GM12878 (cell line): ENCODE measurements at regions of chr4 and their contacts with region 1.

Region 1: GRCh38 chr4:105146276-105147015 is at the start of gene TET2:
- DNase-seq: peak; percentile 74
- ATAC-seq: peak; percentile 80
- H3K4me3 ChIP-seq: peak within 1 kb of the TSS; percentile 99
- H3K27ac ChIP-seq: peak within 1 kb of the TSS; percentile 96
- H3K4me1 ChIP-seq: no peaks in the 10 kb centered on the region
- H3K27me3 ChIP-seq: no peaks in the 10 kb centered on the region
- CTCF ChIP-seq: peak in 1 of 3 experiments; percentile 8; a peak in 1 of 6 replicates
- EP300 ChIP-seq: no peak; a peak in 1 of 4 replicates
- POLR2A ChIP-seq: peak; percentile 76
- RAD21 ChIP-seq: no peak; the same call in 1 of the 2 replicates
- polyA plus RNA-seq, gene TET2: 3.7 to 6.6 TPM

Region 2: DNA sequence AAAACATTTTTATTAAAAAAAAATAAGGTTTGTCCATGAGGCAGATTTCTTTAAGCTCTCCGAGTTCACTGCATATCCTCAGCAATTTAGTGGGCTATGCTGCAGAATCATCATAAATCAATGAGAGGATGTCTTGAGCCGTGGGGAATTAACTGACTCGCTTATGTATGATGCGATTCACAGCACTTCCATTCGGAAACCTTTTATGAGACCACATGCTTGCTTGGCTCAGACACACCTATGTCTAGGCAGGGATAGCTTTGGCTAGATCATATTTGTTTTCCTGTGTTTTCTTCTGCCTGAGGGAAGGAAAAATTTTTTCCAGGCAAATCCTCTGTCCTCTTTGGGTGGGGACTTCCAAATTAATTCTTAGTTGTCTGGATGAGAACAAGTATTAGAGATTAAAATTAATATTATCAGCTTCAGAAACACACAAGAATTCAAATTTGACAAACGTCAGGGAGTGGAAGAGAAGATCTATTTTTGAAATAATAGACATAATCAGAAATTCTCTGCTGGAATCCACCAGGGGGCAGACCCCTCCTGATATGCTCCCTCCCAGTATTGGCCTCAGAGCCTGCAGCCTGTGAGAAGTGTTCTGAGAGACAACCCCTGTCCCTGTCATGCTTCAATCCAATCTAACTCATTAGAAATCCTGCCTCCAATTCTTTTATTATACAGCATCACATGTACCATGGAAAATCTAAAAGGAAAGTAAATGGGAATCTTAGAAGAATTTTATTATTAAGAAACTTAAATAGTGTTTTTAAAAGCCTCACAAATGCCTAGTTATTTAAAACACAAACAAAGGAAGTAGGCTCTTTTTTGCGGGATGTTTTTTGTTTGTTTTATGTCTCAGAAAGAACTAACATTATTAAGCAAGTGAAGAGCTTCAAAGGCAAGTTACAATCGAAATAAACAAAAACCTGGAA is 1081.5 kb before region 1 on chr4:
- CTCF ChIA-PET with region 1: no interaction called
- POLR2A ChIA-PET with region 1: no interaction called
- RAD21 ChIA-PET with region 1: no interaction called
- SMC1A ChIA-PET with region 1: no interaction called
- in situ Hi-C with region 1: no loop called
- intact Hi-C with region 1: loop called (anchors 10 kb)
- DNase-seq: peak; percentile 23
- ATAC-seq: peak; percentile 97
- H3K4me3 ChIP-seq: no peak overlapping the region
- H3K27ac ChIP-seq: no peak overlapping the region
- H3K4me1 ChIP-seq: no peaks in the 10 kb centered on the region
- H3K27me3 ChIP-seq: no peaks in the 10 kb centered on the region
- CTCF ChIP-seq: peak; percentile 56 to 74 (median 58); a peak in 5 of 6 replicates
- EP300 ChIP-seq: no peak
- POLR2A ChIP-seq: no peak
- RAD21 ChIP-seq: peak; percentile 88

Region 3: GRCh38 chr4:104868958-104869357 is 277.5 kb before region 1 on chr4:
- CTCF ChIA-PET with region 1: no interaction called
- POLR2A ChIA-PET with region 1: no interaction called
- RAD21 ChIA-PET with region 1: no interaction called
- SMC1A ChIA-PET with region 1: no interaction called
- in situ Hi-C with region 1: no loop called
- intact Hi-C with region 1: loop called (anchors 2 kb)
- DNase-seq: peak; percentile 79
- ATAC-seq: peak; percentile 93
- H3K4me3 ChIP-seq: peak overlapping the region; percentile 24; the same call in 1 of the 2 replicates
- H3K27ac ChIP-seq: peak overlapping the region; percentile 67
- H3K4me1 ChIP-seq: peaks cover 36% of the 10 kb centered on the region
- H3K27me3 ChIP-seq: no peaks in the 10 kb centered on the region
- CTCF ChIP-seq: no peak
- EP300 ChIP-seq: peak; percentile 92 to 96
- POLR2A ChIP-seq: no peak
- RAD21 ChIP-seq: peak; percentile 24; the same call in 1 of the 2 replicates

Region 4: DNA sequence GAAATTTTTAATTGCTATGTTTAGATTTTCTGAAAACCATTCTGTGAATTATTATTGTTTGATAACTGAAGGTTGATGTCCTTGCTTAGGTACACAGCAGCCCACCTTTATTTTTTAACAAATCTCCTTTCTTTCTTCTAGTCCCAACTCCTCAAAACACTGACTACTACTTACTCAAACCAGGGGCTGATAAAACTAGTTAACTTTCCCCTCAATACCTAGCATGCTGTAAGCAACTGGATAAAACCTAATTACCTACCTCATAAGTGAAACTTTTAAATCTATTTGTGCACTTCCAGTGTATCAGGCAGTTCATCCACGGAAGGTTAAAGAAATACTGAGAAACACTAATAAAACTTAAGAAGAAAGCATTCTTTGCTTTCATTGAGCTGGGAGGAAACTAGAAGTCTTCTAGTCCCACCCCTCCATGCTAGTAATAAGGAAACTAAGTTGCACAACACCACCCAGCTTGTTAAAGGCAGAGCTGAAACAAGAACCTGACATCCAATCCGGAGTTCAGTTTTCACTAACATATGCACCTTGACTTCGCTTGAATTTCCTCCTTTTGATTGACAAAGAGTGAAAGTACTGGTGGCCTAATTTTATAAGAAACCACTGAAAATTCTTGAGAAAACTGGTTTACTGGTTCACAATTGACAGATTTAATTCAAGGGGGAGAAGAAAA is 180.0 kb before region 1 on chr4:
- CTCF ChIA-PET with region 1: no interaction called
- POLR2A ChIA-PET with region 1: no interaction called
- RAD21 ChIA-PET with region 1: no interaction called
- SMC1A ChIA-PET with region 1: interaction called, 3 read pairs
- in situ Hi-C with region 1: no loop called
- intact Hi-C with region 1: loop called (anchors 5 kb)
- DNase-seq: peak; percentile 96
- ATAC-seq: peak; percentile 95
- H3K4me3 ChIP-seq: peak overlapping the region; percentile 51; the same call in 1 of the 2 replicates
- H3K27ac ChIP-seq: peak overlapping the region; percentile 91
- H3K4me1 ChIP-seq: peaks cover 35% of the 10 kb centered on the region
- H3K27me3 ChIP-seq: no peaks in the 10 kb centered on the region
- CTCF ChIP-seq: no peak
- EP300 ChIP-seq: peak in 1 of 2 experiments; percentile 40; a peak in 1 of 4 replicates
- POLR2A ChIP-seq: no peak
- RAD21 ChIP-seq: peak; percentile 23; the same call in 1 of the 2 replicates

Region 5: DNA sequence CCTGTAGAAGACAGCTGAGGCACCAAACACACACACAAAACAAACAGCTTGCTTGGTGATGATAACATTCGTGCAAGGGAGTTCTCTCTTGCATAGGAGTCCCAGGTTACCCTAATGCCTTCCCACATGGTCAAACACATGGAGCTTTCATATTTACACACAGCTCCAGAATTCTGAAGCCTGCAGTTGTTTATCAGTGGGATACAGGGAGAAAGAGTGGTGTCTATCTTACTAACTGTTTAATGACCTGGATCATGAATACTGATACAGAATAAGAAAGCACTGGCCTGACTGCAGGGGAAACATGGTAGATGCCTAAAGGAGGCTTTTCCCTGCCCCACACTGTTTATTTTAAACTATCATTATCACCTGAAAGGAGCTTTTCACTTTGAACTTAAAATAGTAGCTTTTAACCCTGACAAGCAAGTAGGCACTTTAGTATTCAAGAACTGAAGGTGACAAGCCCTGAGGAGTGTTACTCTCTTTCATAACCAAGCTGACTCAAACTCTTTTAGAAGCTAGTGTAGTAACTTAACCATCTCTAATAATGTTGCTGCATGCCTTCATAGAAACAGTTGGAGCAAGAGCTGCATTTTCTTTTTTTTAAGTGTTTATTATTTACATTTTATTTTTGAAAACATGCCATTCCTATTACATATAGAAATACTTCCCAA is 15.8 kb after region 1 on chr4:
- CTCF ChIA-PET with region 1: interaction called, 4 read pairs
- POLR2A ChIA-PET with region 1: interaction called, 4 read pairs
- RAD21 ChIA-PET with region 1: interaction called, 4 read pairs
- SMC1A ChIA-PET with region 1: interaction called, 14 read pairs
- in situ Hi-C with region 1: no loop called
- intact Hi-C with region 1: no loop called
- DNase-seq: no peak
- ATAC-seq: peak; percentile 70
- H3K4me3 ChIP-seq: no peak overlapping the region
- H3K27ac ChIP-seq: no peak overlapping the region; the same call in 1 of the 2 replicates
- H3K4me1 ChIP-seq: peaks cover 5% of the 10 kb centered on the region; the same call in 1 of the 2 replicates
- H3K27me3 ChIP-seq: no peaks in the 10 kb centered on the region
- CTCF ChIP-seq: no peak
- EP300 ChIP-seq: no peak
- POLR2A ChIP-seq: no peak
- RAD21 ChIP-seq: no peak

Region 6: DNA sequence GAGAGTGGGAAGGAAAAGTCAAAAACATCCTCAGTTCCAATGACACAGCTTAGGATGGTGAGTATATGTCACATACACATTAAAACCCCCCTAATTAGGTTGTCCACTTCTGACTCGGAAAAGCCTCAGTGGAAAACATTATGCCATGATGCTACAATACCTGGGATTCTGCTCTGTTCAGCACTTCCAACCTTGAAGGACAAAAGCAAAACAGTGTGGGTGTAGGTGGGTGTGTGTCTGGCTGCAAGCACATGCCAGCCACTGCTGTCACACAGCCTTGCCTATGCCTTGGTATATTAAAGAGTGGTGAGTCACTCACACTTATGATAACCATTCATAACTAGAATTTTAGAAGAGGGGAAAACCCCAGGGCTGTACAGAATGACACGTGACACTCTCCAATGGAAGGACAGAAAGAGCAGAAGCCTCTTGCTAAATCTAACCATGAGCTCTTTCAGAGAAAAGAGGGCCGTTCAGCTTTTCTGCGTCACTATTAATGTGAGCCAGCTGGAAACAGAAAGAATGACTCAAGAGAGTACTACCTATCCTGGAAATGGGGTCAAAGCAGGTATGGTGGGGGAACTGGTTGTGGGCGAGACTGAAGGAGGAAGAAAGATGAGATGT is 159.8 kb after region 1 on chr4:
- CTCF ChIA-PET with region 1: interaction called, 3 read pairs
- POLR2A ChIA-PET with region 1: interaction called, 6 read pairs
- RAD21 ChIA-PET with region 1: interaction called, 6 read pairs
- SMC1A ChIA-PET with region 1: interaction called, 10 read pairs
- in situ Hi-C with region 1: no loop called
- intact Hi-C with region 1: loop called (anchors 1 kb)
- DNase-seq: peak; percentile 91
- ATAC-seq: peak; percentile 91
- H3K4me3 ChIP-seq: peak overlapping the region; percentile 24; the same call in 1 of the 2 replicates
- H3K27ac ChIP-seq: peak overlapping the region; percentile 86
- H3K4me1 ChIP-seq: peaks cover 14% of the 10 kb centered on the region
- H3K27me3 ChIP-seq: no peaks in the 10 kb centered on the region
- CTCF ChIP-seq: no peak
- EP300 ChIP-seq: peak; percentile 75 to 77; a peak in 3 of 4 replicates
- POLR2A ChIP-seq: peak; percentile 43; the same call in 1 of the 2 replicates
- RAD21 ChIP-seq: 0 out of 2 replicates have a peak, but pooled peaks have one; percentile 3

Region 7: GRCh38 chr4:105715692-105716278 is 569.3 kb after region 1 on chr4:
- CTCF ChIA-PET with region 1: interaction called, 3 read pairs
- POLR2A ChIA-PET with region 1: no interaction called
- RAD21 ChIA-PET with region 1: no interaction called
- SMC1A ChIA-PET with region 1: interaction called, 5 read pairs
- in situ Hi-C with region 1: no loop called
- intact Hi-C with region 1: loop called (anchors 10 kb)
- DNase-seq: no peak
- ATAC-seq: 0 out of 3 replicates have a peak, but pooled peaks have one; percentile 10
- H3K4me3 ChIP-seq: no peak overlapping the region
- H3K27ac ChIP-seq: no peak overlapping the region
- H3K4me1 ChIP-seq: peaks cover 3% of the 10 kb centered on the region; the same call in 1 of the 2 replicates
- H3K27me3 ChIP-seq: no peaks in the 10 kb centered on the region
- CTCF ChIP-seq: peak; percentile 17 to 48 (median 36); a peak in 2 of 6 replicates
- EP300 ChIP-seq: no peak
- POLR2A ChIP-seq: no peak
- RAD21 ChIP-seq: peak; percentile 49